Gastrocnemius medialis (tissue), 4 donors: ENCODE measurements at regions of chr2 and their contacts with region 1.

Region 1: GRCh38 chr2:45650851-45651414 is 542 bp upstream of the PRKCE start:
- DNase-seq: peak; percentile 91 to 92
- ATAC-seq: peak; percentile 77 to 82
- H3K4me3 ChIP-seq: peak overlapping the region; percentile 74 to 93 (median 84)
- H3K27ac ChIP-seq: peak overlapping the region; percentile 93 to 100 (median 94)
- H3K4me1 ChIP-seq: peaks cover 24 to 33% of the 10 kb centered on the region in 2 donors
- H3K27me3 ChIP-seq: no peaks in the 10 kb centered on the region
- CTCF ChIP-seq: peak in 4 of 5 experiments; percentile 39 to 69 (median 56)
- POLR2A ChIP-seq: peak; percentile 97 to 98

Region 2: DNA sequence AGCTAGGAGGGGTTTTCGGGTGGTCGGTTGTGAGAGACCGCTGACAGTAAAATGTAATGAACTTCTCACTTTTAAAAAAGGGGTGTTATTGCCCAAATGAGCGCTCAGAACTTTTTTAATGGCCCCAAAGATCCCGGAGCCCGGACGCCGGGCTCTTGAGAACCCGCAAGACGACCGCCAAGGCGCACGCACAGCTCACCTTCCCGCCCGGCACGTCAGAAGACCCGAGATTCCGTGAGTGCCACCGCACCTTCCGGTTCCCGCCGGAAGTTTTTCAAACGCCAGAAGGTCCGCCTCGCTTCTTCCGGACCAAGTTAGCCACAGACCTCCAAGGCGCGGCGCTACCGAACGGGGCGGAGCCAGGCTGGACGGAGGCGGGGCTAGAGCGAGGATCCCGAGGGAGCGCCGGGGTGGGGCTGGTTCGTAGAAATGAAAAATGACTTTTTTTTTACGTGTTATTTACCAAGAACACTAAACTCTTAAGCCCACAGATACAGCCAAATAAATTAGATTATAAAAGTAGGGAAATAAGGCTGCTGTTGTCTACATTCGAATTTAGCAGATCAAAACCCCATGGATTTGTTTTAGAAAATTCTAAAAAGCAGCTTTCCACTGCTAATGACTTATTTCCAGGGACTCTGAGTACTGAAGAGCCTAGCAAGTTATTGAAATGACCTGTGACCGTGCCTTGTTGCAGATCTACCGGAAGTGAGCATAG is 39.8 kb before region 1 on chr2 and contains the start of gene SRBD1:
- in situ Hi-C with region 1: no loop called
- intact Hi-C with region 1: loop called (anchors 1 kb)
- DNase-seq: peak; percentile 93 to 94
- ATAC-seq: peak; percentile 98 to 99
- H3K4me3 ChIP-seq: peak within 1 kb of the TSS; percentile 65 to 87 (median 79)
- H3K27ac ChIP-seq: peak within 1 kb of the TSS; percentile 85 to 95 (median 90)
- H3K4me1 ChIP-seq: peaks cover 10 to 13% of the 10 kb centered on the region in 2 donors
- H3K27me3 ChIP-seq: no peaks in the 10 kb centered on the region
- CTCF ChIP-seq: no peak
- POLR2A ChIP-seq: peak; percentile 62 to 75
- total RNA-seq, gene SRBD1: 3.0 to 10.1 (median 4.5) TPM

Region 3: GRCh38 chr2:45691171-45691999 is 40.5 kb after region 1 on chr2:
- in situ Hi-C with region 1: no loop called
- intact Hi-C with region 1: loop called (anchors 1 kb)
- DNase-seq: peak; percentile 78 to 87
- ATAC-seq: peak; percentile 98 to 99
- H3K4me3 ChIP-seq: peak overlapping the region in 2 of 4 donors; percentile 14 to 25
- H3K27ac ChIP-seq: peak overlapping the region; percentile 81 to 89 (median 82)
- H3K4me1 ChIP-seq: peaks cover 23 to 26% of the 10 kb centered on the region in 2 donors
- H3K27me3 ChIP-seq: no peaks in the 10 kb centered on the region
- CTCF ChIP-seq: no peak
- POLR2A ChIP-seq: peak; percentile 16 to 21

Region 4: DNA sequence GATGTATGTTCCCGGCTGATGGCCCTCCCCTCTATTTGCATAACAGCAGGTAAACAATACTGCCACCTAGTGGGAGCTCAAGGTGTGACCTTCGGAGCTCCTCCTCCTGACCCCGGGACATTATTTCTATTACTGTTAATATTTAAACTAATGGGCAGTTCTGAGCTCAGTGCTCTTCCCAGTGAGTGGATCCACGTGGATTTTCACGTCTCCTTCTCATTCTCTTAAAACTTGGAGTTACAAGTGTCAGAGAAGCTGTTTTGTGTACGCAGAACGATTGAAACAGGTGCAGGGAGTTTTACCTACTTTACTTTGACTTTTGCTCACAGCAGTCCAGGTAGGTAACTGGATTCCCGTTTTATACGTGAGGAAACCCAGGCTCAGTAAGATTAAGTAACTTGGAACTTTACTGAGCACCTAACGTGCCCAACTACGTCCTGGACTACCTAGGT is 127.8 kb after region 1 on chr2:
- in situ Hi-C with region 1: loop called (anchors 5 kb)
- intact Hi-C with region 1: no loop called
- DNase-seq: peak; percentile 40 to 60
- ATAC-seq: peak; percentile 75 to 85
- H3K4me3 ChIP-seq: no peak overlapping the region
- H3K27ac ChIP-seq: no peak overlapping the region
- H3K4me1 ChIP-seq: peaks cover 10 to 13% of the 10 kb centered on the region in 2 donors
- H3K27me3 ChIP-seq: no peaks in the 10 kb centered on the region
- CTCF ChIP-seq: peak; percentile 81 to 93 (median 85)
- POLR2A ChIP-seq: no peak

Region 5: DNA sequence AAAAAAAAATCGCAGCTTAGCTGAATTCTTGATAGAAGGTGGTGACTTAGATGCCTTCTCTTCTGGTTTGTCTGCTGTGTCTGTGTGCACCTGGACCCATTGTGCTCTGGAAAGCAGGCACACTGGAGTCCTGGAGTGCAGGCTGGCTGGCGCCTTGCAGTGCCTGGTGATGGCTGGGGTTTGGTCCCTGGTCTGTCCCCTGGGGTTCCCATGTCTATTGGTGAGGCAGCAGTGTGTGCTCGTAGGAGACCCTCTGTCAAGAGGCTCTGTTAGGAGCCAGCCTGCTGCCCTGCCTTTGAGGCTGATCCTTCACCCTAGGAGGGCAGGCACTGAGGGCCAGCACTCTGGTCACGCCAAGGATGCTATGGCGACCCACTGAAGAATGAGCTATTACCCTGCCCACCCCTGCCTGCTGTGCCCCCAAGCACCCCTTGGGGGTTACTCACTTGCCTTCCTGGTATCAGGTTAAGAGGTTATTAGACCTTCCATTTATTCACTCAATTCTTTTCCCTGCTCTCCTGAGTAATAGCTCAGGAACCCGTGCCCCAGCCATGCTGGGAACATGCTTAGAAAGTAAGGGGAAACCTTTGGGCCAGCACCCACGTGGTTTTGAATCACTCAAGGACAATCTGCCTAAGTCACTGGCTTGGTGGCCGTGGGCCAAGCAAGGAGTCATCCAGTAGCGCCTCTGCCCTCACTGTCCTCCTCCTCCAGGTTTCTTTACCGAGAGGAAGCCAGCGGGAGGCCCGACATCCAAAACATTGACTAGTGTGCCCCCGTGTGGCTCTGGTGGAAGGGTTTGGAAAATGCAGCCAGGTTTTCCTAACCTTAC is 285.1 kb after region 1 on chr2:
- in situ Hi-C with region 1: loop called in 3 of 4 experiments (anchors 5 kb)
- intact Hi-C with region 1: loop called (anchors 1 kb)
- DNase-seq: peak; percentile 99 to 100
- ATAC-seq: peak; percentile 94
- H3K4me3 ChIP-seq: no peak overlapping the region
- H3K27ac ChIP-seq: peak overlapping the region; percentile 82 to 89 (median 86)
- H3K4me1 ChIP-seq: peaks cover 22 to 35% of the 10 kb centered on the region in 2 donors
- H3K27me3 ChIP-seq: no peaks in the 10 kb centered on the region
- CTCF ChIP-seq: peak; percentile 77 to 87 (median 80)
- POLR2A ChIP-seq: no peak